ENCODE measurements at regions of chr2 and their contacts with region 1.

Region 1: GRCh38 chr2:27303093-27304025 is 4.9 kb downstream of the UCN start:
- DNase-seq: peak; percentile 85
- H3K4me3 ChIP-seq: peak overlapping the region in 1 of 2 experiments; percentile 24; a peak in 1 of 4 replicates
- H3K27ac ChIP-seq: no peak overlapping the region
- H3K4me1 ChIP-seq: peaks cover 0 to 15% of the 10 kb centered on the region in 2 experiments; a peak in 1 of 4 replicates
- H3K27me3 ChIP-seq: peaks cover 15% of the 10 kb centered on the region; the same call in 1 of the 2 replicates
- CTCF ChIP-seq: peak; percentile 99
- EP300 ChIP-seq: no peak
- RAD21 ChIP-seq: peak; percentile 79

Region 2: GRCh38 chr2:27123302-27124231 is 179.8 kb before region 1 on chr2 and contains the start of gene ABHD1:
- CTCF ChIA-PET with region 1: interaction called, 10 read pairs
- POLR2A ChIA-PET with region 1: no interaction called
- DNase-seq: peak; percentile 94
- H3K4me3 ChIP-seq: peak within 1 kb of the TSS; percentile 54 to 59
- H3K27ac ChIP-seq: peak within 1 kb of the TSS in 1 of 2 experiments; percentile 64; a peak in 1 of 4 replicates
- H3K4me1 ChIP-seq: peaks cover 0 to 18% of the 10 kb centered on the region in 2 experiments; a peak in 1 of 4 replicates
- H3K27me3 ChIP-seq: no peaks in the 10 kb centered on the region
- CTCF ChIP-seq: no peak
- EP300 ChIP-seq: no peak
- RAD21 ChIP-seq: no peak
- polyA plus RNA-seq, gene ABHD1: 3.3 and 4.1 TPM in 2 replicates

Region 3: DNA sequence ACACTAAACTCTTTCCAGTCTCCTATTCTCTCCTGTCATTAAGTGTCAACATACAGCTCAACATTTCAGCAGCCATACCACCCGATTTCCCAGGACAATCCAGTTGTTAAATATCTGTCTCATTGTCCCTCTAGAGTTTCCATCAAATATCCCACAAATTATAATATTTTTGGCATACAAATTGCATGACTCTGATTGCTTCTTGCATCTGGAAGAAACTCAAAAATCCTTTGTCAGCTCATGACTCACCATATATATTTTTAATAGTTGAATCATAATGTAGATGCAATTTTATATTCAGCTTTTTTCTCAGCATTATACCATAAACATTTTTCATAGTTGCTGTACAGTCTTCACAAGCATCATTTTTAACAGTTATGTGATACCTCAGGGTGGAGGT is 47.7 kb before region 1 on chr2:
- CTCF ChIA-PET with region 1: interaction called, 27 read pairs
- POLR2A ChIA-PET with region 1: no interaction called
- DNase-seq: no peak
- H3K4me3 ChIP-seq: no peak overlapping the region
- H3K27ac ChIP-seq: peak overlapping the region; percentile 36 to 82
- H3K4me1 ChIP-seq: peaks cover 14 to 18% of the 10 kb centered on the region in 2 experiments
- H3K27me3 ChIP-seq: peaks cover 5% of the 10 kb centered on the region; the same call in 1 of the 2 replicates
- CTCF ChIP-seq: no peak
- EP300 ChIP-seq: no peak
- RAD21 ChIP-seq: no peak

Region 4: GRCh38 chr2:27271631-27272340 is 31.6 kb before region 1 on chr2:
- CTCF ChIA-PET with region 1: interaction called, 284 read pairs
- POLR2A ChIA-PET with region 1: no interaction called
- DNase-seq: no peak
- H3K4me3 ChIP-seq: no peak overlapping the region
- H3K27ac ChIP-seq: no peak overlapping the region
- H3K4me1 ChIP-seq: no peaks in the 10 kb centered on the region
- H3K27me3 ChIP-seq: peaks cover 29% of the 10 kb centered on the region; the same call in 1 of the 2 replicates
- CTCF ChIP-seq: no peak
- EP300 ChIP-seq: no peak
- RAD21 ChIP-seq: no peak

Region 5: DNA sequence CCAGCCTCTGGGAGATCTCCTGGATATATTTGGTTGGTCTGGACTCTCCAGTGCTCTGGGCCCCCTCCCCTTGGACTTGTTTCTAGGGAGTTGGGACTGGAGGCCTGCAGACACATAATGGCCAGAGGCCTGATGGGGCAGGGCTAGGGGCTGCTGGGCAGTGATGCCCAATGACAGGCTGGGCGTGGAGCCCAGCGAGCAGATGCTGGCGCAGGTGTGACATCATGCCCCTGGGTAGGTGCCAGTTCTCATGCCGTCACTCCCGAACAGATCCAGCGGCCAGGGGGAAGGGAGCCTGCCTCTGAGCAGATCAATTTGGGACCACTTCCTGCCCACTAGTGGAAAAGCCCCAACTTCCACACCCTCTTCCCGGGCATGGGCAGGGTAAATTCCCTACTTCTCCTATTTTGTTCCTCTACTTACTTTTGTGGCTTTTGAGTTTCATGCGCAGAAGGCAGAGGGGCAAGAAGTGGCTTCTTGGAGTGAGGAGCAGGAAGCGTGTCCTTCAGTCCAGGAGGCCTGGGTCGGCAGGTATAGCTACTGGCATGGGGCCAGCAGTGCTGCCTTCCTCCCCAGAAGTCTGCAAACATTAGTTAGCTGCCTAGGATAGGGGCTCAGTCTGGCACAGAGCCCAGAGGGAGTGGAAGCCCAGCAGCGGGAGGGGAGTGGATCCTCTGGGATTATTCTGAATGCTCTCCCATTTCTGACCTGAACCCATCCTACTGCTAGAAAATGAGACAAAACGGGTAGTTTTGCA is 13.5 kb after region 1 on chr2:
- CTCF ChIA-PET with region 1: interaction called, 43 read pairs
- POLR2A ChIA-PET with region 1: interaction called, 6 read pairs
- DNase-seq: no peak
- H3K4me3 ChIP-seq: no peak overlapping the region
- H3K27ac ChIP-seq: no peak overlapping the region
- H3K4me1 ChIP-seq: peaks cover 9 to 21% of the 10 kb centered on the region in 2 experiments; a peak in 3 of 4 replicates
- H3K27me3 ChIP-seq: no peaks in the 10 kb centered on the region
- CTCF ChIP-seq: no peak
- EP300 ChIP-seq: no peak
- RAD21 ChIP-seq: no peak

Region 6: DNA sequence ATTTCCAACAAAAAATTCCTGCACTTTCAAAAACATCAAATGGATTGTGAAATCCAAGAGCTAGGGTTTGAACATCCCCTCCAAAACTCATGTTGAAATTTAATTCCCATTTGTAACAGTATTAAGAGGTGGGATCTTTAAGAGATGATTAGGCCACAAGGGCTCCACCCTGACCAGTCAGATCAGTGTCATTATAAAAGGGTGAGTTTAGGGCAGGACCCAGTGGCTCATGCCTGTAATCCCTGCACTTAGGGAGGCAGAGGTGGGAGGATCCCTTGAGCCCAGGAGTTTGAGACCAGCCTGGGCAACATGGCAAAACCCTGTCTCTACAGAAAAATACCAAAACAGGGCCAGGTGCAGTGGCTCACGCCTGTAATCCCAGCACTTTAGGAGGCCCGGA is 44.3 kb after region 1 on chr2:
- CTCF ChIA-PET with region 1: interaction called, 13 read pairs
- POLR2A ChIA-PET with region 1: no interaction called
- DNase-seq: no peak
- H3K4me3 ChIP-seq: no peak overlapping the region
- H3K27ac ChIP-seq: no peak overlapping the region
- H3K4me1 ChIP-seq: no peaks in the 10 kb centered on the region
- H3K27me3 ChIP-seq: no peaks in the 10 kb centered on the region
- CTCF ChIP-seq: no peak
- EP300 ChIP-seq: no peak
- RAD21 ChIP-seq: no peak